ENCODE measurements at regions of chr16 and their contacts with region 1.

Region 1: GRCh38 chr16:70653809-70654771 is 7.7 kb downstream of the IL34 start:
- DNase-seq: peak; percentile 95
- H3K4me3 ChIP-seq: peak overlapping the region in 2 of 3 experiments; percentile 8 to 29
- H3K27ac ChIP-seq: no peak overlapping the region
- H3K4me1 ChIP-seq: no peaks in the 10 kb centered on the region
- H3K27me3 ChIP-seq: no peaks in the 10 kb centered on the region
- CTCF ChIP-seq: peak; percentile 67 to 78
- POLR2A ChIP-seq: no peak

Region 2: DNA sequence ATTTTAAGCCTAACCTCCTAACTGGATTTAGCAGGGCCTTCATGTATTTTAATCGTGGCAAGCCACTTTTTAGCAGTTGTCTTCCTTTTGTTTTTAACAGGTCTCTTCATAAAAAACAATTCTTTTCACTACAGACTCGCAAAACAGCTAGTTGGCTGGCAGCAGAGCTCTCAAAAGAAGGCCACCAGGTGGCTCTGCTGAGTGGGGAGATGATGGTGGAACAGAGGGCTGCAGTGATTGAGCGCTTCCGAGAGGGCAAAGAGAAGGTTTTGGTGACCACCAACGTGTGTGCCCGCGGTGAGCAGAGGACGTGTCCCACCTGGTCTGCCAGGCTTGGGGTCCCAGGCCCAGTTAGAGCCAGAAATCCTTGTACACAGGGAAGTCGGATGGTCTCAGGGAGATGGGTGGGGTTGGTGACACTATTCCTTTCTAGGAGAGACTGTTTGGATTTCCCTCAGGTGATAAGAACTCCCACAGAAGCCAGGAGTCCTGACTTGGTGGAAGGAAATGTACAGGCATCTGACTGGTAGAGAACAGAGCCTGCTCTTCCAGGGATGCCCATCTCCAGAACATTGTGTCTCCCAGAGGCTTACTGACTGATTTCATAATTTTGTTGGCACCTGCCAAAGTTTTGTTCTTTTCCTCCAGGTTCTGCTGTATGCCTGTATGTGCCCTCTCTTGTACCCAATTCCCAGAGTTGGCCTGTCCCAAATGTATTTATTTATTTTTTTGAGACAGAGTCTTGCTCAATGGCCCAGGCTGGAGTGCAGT is 322.3 kb before region 1 on chr16:
- CTCF ChIA-PET with region 1: interaction called, 14 read pairs
- POLR2A ChIA-PET with region 1: no interaction called
- dilution Hi-C with region 1: no loop called
- intact Hi-C with region 1: loop called (anchors 1 kb)
- DNase-seq: no peak
- H3K4me3 ChIP-seq: no peak overlapping the region
- H3K27ac ChIP-seq: no peak overlapping the region
- H3K4me1 ChIP-seq: no peaks in the 10 kb centered on the region
- H3K27me3 ChIP-seq: no peaks in the 10 kb centered on the region
- CTCF ChIP-seq: peak; percentile 36 to 48
- POLR2A ChIP-seq: no peak

Region 3: DNA sequence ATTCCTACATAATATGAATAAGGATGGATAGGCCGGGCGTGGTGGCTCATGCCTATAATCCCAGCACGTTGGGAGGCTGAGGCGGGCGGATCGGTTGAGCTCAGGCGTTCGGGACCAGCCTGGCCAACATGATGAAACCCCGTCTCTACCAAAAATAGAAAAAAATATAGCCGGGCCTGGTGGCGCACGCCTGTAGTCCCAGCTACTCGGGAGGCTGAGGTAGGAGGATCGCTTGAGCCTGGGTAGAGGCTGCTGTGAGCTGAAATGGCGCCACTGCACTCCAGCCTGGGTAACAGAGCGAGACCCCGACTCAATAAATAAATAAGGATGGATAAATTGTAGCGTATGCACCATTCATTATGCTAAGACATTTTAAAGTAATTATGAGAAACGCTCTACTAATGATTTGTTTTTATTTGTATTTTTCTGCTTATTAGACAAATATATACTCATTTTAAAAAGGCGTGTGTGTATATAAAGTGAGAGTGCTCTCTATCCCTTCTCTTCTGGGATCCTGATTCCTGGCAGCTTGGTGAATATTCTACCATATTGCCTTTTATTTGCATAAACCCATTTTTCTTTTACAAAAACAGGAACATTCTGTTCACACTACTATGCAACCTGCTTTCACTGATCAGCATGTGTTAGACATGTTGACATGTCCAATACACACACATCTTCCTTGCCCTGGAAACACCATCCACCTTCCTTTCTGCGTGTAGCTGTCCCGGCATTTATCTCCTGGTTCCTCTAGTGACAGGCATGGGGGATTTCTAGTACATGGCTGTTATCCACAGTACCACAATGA is 281.0 kb before region 1 on chr16:
- CTCF ChIA-PET with region 1: interaction called, 29 read pairs
- POLR2A ChIA-PET with region 1: no interaction called
- dilution Hi-C with region 1: no loop called
- intact Hi-C with region 1: loop called (anchors 1 kb)
- DNase-seq: no peak
- H3K4me3 ChIP-seq: no peak overlapping the region
- H3K27ac ChIP-seq: no peak overlapping the region
- H3K4me1 ChIP-seq: no peaks in the 10 kb centered on the region
- H3K27me3 ChIP-seq: no peaks in the 10 kb centered on the region
- CTCF ChIP-seq: no peak
- POLR2A ChIP-seq: no peak

Region 4: DNA sequence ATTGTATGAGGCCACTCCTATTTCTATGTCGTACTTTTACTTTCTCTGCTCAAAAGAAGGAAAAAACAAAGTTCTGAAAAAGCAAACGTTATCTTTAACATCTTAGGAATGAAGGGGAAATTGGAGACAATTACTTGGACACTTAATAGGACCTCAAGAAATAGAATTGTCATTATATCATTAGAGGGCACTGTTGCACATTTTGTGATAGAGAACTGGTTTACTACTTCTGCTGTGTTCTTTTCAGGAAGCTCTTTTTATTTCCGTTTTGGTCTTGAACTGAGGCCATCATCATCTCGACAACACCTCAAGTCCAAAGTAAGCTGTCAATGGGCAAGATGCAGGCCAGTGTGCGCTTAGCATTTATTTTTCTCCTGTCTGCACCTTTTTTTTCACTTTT is 145.3 kb before region 1 on chr16:
- CTCF ChIA-PET with region 1: interaction called, 39 read pairs
- POLR2A ChIA-PET with region 1: no interaction called
- dilution Hi-C with region 1: no loop called
- intact Hi-C with region 1: loop called (anchors 5 kb)
- DNase-seq: peak; percentile 78
- H3K4me3 ChIP-seq: no peak overlapping the region
- H3K27ac ChIP-seq: no peak overlapping the region
- H3K4me1 ChIP-seq: peaks cover 10% of the 10 kb centered on the region
- H3K27me3 ChIP-seq: no peaks in the 10 kb centered on the region
- CTCF ChIP-seq: peak in 1 of 2 donors; percentile 10
- POLR2A ChIP-seq: no peak

Region 5: DNA sequence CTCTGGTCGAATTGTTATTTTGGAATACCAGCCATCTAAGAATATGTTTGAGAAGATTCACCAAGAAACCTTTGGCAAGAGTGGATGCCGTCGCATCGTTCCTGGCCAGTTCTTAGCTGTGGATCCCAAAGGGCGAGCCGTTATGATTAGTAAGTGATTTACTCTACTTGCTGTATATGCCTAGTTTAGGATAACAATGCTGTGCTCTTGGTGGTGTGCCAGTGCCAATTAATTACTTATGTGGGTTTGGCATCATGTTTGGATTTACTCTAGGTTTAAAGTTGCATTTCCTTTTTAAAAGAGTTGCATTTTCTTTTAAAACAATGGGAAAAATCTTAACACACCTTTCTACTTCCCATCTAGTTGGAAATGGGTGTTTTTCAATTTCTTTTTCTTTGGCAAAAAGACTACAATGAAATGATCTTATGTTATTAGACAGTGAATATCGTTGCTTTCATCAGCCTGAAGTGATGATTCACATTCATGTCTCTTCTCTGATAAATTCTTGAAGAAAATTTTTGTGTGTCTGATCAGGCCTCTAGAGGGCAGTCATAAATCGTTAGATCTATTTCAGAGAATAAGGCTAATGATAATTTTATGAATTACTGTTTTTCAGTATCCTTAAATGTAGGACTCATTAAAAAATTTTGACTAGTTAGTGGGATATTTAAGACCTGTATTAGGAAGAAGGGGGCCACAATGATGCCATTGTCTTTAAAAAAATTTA is 124.9 kb before region 1 on chr16:
- CTCF ChIA-PET with region 1: interaction called, 28 read pairs
- POLR2A ChIA-PET with region 1: no interaction called
- dilution Hi-C with region 1: loop called (anchors 25 kb)
- intact Hi-C with region 1: loop called (anchors 1 kb)
- DNase-seq: peak; percentile 69
- H3K4me3 ChIP-seq: no peak overlapping the region
- H3K27ac ChIP-seq: peak overlapping the region; percentile 10
- H3K4me1 ChIP-seq: peaks cover 28% of the 10 kb centered on the region
- H3K27me3 ChIP-seq: no peaks in the 10 kb centered on the region
- CTCF ChIP-seq: peak in 1 of 2 donors; percentile 23
- POLR2A ChIP-seq: no peak

Region 6: GRCh38 chr16:70576431-70577255 is 77.4 kb before region 1 on chr16:
- CTCF ChIA-PET with region 1: interaction called, 175 read pairs
- POLR2A ChIA-PET with region 1: interaction called, 3 read pairs
- dilution Hi-C with region 1: no loop called
- intact Hi-C with region 1: loop called (anchors 1 kb)
- DNase-seq: peak; percentile 85
- H3K4me3 ChIP-seq: no peak overlapping the region
- H3K27ac ChIP-seq: peak overlapping the region; percentile 41
- H3K4me1 ChIP-seq: peaks cover 55% of the 10 kb centered on the region
- H3K27me3 ChIP-seq: no peaks in the 10 kb centered on the region
- CTCF ChIP-seq: no peak
- POLR2A ChIP-seq: peak; percentile 47

Region 7: GRCh38 chr16:70675851-70676513 is 21.9 kb after region 1 on chr16:
- CTCF ChIA-PET with region 1: no interaction called
- POLR2A ChIA-PET with region 1: no interaction called
- dilution Hi-C with region 1: no loop called
- intact Hi-C with region 1: no loop called
- DNase-seq: no peak
- H3K4me3 ChIP-seq: no peak overlapping the region
- H3K27ac ChIP-seq: no peak overlapping the region
- H3K4me1 ChIP-seq: no peaks in the 10 kb centered on the region
- H3K27me3 ChIP-seq: no peaks in the 10 kb centered on the region
- CTCF ChIP-seq: no peak
- POLR2A ChIP-seq: no peak

Region 8: GRCh38 chr16:70706946-70707465 is 52.9 kb after region 1 on chr16:
- CTCF ChIA-PET with region 1: no interaction called
- POLR2A ChIA-PET with region 1: no interaction called
- dilution Hi-C with region 1: no loop called
- intact Hi-C with region 1: no loop called
- DNase-seq: peak; percentile 76
- H3K4me3 ChIP-seq: no peak overlapping the region
- H3K27ac ChIP-seq: peak overlapping the region; percentile 44
- H3K4me1 ChIP-seq: peaks cover 38% of the 10 kb centered on the region
- H3K27me3 ChIP-seq: no peaks in the 10 kb centered on the region
- CTCF ChIP-seq: no peak
- POLR2A ChIP-seq: no peak